Heart left ventricle (tissue), 16 donors: ENCODE measurements at regions of chr6 and their contacts with region 1.

Region 1: GRCh38 chr6:3825851-3826581 is 23.2 kb upstream of the FAM50B start:
- DNase-seq: peak; percentile 79 to 94 (median 86)
- ATAC-seq: peak; percentile 74 to 96 (median 94)
- H3K4me3 ChIP-seq: peak overlapping the region in 10 of 12 donors; percentile 2 to 41 (median 14)
- H3K27ac ChIP-seq: peak overlapping the region; percentile 82 to 94 (median 87)
- H3K4me1 ChIP-seq: peaks cover 9 to 45% (median 32%) of the 10 kb centered on the region in 12 donors
- H3K27me3 ChIP-seq: no peaks in the 10 kb centered on the region
- CTCF ChIP-seq: no peak
- POLR2A ChIP-seq: peak in 1 of 2 donors; percentile 30

Region 2: GRCh38 chr6:3899970-3900439 is 74.0 kb after region 1 on chr6:
- intact Hi-C with region 1: no loop called
- DNase-seq: no peak
- ATAC-seq: no peak
- H3K4me3 ChIP-seq: no peak overlapping the region
- H3K27ac ChIP-seq: no peak overlapping the region
- H3K4me1 ChIP-seq: peaks cover 0 to 18% (median 0%) of the 10 kb centered on the region in 12 donors
- H3K27me3 ChIP-seq: no peaks in the 10 kb centered on the region
- CTCF ChIP-seq: no peak
- POLR2A ChIP-seq: no peak

Region 3: GRCh38 chr6:3913077-3913957 is 87.3 kb after region 1 on chr6:
- intact Hi-C with region 1: loop called in 1 of 10 experiments (anchors 5 kb)
- DNase-seq: peak in 4 of 5 donors; percentile 76 to 88 (median 86)
- ATAC-seq: peak; percentile 86 to 95 (median 89)
- H3K4me3 ChIP-seq: no peak overlapping the region
- H3K27ac ChIP-seq: peak overlapping the region; percentile 80 to 94 (median 86)
- H3K4me1 ChIP-seq: peaks cover 4 to 55% (median 37%) of the 10 kb centered on the region in 12 donors
- H3K27me3 ChIP-seq: no peaks in the 10 kb centered on the region
- CTCF ChIP-seq: no peak
- POLR2A ChIP-seq: no peak